Activated CD4-positive, alpha-beta T cell treated with anti-CD3 and anti-CD28 coated beads for 36 hours (primary cell): ENCODE measurements at regions of chr11 and their contacts with region 1.

Region 1: GRCh38 chr11:114439229-114440120 is at the start of gene REXO2:
- DNase-seq: peak; percentile 96
- ATAC-seq: peak; percentile 97
- H3K4me3 Mint-ChIP-seq: peak within 1 kb of the TSS; percentile 93
- H3K27ac Mint-ChIP-seq: peak within 1 kb of the TSS; percentile 93
- H3K4me1 Mint-ChIP-seq: peaks cover 27% of the 10 kb centered on the region
- H3K27me3 Mint-ChIP-seq: no peaks in the 10 kb centered on the region
- total RNA-seq, gene REXO2: 66.6 to 70.0 TPM

Region 2: DNA sequence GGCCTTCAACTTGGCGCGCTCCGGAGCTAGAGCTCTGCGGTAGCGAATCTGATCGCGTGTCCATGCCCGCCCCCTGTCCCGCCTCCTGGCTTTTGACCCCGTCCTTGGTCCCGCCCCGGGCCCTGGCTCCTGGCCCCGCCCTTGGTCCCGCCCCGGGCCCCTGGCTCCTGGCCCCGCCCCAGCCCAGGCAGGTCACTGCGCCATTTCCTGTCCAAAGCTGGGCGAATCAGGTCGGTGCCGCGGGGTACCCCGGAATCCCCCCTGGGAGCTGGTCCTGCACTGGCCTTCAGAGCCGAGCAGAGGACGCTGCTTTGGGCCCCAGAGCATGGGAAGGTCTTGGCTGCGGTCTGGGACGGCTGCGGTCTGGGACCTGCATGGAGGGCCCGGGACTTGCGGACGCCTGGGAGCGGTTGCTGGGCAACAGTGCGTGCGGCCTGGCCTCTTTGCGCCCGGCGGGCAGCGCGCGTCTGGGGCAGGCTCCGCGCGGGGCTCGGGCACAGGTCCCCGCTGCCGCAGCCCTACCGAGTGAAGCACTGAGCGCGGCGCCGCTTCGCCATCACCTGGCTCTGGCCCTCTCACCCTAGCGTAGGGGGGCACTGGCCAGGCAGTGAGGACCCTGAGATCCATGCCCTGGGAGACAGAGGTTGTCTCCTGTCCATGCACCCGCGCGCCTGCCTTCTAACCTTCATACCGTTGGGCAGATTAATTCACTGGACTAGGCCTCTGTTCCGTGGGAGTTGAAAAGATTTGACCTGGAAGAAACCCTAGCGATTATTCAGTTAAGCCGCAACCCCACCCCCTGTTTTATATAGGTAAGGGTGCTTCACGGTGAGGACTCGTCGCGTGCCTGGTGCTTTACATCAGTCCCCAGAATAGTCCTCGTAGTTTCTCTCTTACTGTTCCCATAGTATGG is 1124.8 kb before region 1 on chr11 and contains the start of gene TTC12:
- CTCF ChIA-PET with region 1: no interaction called
- POLR2A ChIA-PET with region 1: no interaction called
- intact Hi-C with region 1: loop called in 1 of 2 experiments (anchors 10 kb)
- DNase-seq: peak; percentile 97
- ATAC-seq: peak; percentile 99
- H3K4me3 Mint-ChIP-seq: peak within 1 kb of the TSS; percentile 77
- H3K27ac Mint-ChIP-seq: peak within 1 kb of the TSS; percentile 82
- H3K4me1 Mint-ChIP-seq: peaks cover 24% of the 10 kb centered on the region
- H3K27me3 Mint-ChIP-seq: no peaks in the 10 kb centered on the region
- total RNA-seq, gene TTC12: 16.3 to 17.6 TPM

Region 3: DNA sequence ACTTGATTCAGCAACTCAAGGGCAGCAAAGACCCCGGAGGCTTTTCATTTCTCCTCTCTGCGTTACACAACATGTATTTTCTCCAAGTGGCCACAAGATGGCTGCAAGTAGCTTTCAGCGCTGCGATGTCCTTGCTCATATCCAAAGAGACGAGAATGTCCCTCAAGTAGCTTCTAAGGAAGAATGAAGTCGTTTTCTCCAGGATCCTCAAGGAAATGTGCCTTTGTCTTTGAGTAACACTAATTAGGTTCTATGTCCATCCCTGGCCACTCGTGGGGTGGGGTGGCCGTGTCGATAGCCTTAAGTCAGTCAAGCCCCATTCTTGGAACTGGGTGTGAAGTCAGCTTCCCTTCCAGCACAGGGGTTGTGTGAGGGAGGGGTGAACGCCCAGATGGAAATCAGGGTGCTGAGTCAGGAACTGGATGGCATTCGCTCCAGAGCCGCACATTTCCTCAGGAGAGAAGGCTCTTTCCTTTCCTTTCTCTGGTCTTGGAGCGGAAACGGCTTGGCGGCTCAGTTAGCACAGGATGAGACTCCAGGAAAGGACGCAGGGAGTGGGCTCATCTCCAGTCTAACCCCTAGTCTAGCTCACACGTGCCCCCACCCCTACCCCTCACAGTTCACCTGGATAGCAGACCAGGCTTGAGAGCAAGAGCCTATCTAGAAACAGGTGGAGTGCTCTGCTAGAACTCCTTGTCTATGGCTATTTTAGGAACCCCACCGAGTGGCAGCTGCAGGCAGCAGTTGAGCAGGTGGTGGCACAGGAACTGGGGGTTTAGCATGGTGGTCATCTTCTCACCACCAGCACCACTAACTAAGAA is 99.0 kb before region 1 on chr11:
- CTCF ChIA-PET with region 1: no interaction called
- POLR2A ChIA-PET with region 1: no interaction called
- intact Hi-C with region 1: loop called (anchors 1 to 10 kb)
- DNase-seq: peak; percentile 50
- ATAC-seq: peak; percentile 72
- H3K4me3 Mint-ChIP-seq: peak overlapping the region; percentile 43
- H3K27ac Mint-ChIP-seq: no peak overlapping the region
- H3K4me1 Mint-ChIP-seq: peaks cover 9% of the 10 kb centered on the region
- H3K27me3 Mint-ChIP-seq: peaks cover 4% of the 10 kb centered on the region

Region 4: GRCh38 chr11:114348200-114349191 is 91.0 kb before region 1 on chr11:
- CTCF ChIA-PET with region 1: no interaction called
- POLR2A ChIA-PET with region 1: no interaction called
- intact Hi-C with region 1: loop called (anchors 2 to 10 kb)
- DNase-seq: peak; percentile 38
- ATAC-seq: no peak
- H3K4me3 Mint-ChIP-seq: no peak overlapping the region
- H3K27ac Mint-ChIP-seq: no peak overlapping the region
- H3K4me1 Mint-ChIP-seq: peaks cover 4% of the 10 kb centered on the region
- H3K27me3 Mint-ChIP-seq: no peaks in the 10 kb centered on the region

Region 5: DNA sequence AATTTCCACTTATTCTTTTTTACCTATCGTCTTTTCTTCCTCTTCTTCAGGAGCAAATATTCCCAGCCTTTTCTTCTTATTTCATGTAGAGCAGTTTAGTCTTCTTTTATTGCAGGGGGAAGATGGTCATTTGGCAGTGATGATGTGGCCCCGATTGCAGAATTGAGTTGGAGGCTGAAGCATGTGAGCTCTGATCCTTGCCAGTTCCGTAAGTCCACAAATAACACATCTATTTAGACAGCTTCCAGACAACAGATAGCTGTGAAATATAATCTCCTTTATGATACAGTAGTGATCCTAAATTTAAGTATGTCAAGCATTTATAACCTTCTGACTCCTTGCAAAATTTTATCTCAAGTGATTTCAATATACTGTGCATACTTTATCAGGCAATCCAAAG is 27.3 kb after region 1 on chr11:
- CTCF ChIA-PET with region 1: no interaction called
- POLR2A ChIA-PET with region 1: no interaction called
- intact Hi-C with region 1: no loop called
- DNase-seq: no peak
- ATAC-seq: no peak
- H3K4me3 Mint-ChIP-seq: no peak overlapping the region
- H3K27ac Mint-ChIP-seq: no peak overlapping the region
- H3K4me1 Mint-ChIP-seq: no peaks in the 10 kb centered on the region
- H3K27me3 Mint-ChIP-seq: no peaks in the 10 kb centered on the region

Region 6: GRCh38 chr11:114625294-114625693 is 185.8 kb after region 1 on chr11:
- CTCF ChIA-PET with region 1: no interaction called
- POLR2A ChIA-PET with region 1: no interaction called
- intact Hi-C with region 1: loop called in 1 of 2 experiments (anchors 5 kb)
- DNase-seq: no peak
- ATAC-seq: no peak
- H3K4me3 Mint-ChIP-seq: no peak overlapping the region
- H3K27ac Mint-ChIP-seq: no peak overlapping the region
- H3K4me1 Mint-ChIP-seq: no peaks in the 10 kb centered on the region
- H3K27me3 Mint-ChIP-seq: no peaks in the 10 kb centered on the region